ENCODE measurements at regions of chr13 and their contacts with region 1.

Region 1: DNA sequence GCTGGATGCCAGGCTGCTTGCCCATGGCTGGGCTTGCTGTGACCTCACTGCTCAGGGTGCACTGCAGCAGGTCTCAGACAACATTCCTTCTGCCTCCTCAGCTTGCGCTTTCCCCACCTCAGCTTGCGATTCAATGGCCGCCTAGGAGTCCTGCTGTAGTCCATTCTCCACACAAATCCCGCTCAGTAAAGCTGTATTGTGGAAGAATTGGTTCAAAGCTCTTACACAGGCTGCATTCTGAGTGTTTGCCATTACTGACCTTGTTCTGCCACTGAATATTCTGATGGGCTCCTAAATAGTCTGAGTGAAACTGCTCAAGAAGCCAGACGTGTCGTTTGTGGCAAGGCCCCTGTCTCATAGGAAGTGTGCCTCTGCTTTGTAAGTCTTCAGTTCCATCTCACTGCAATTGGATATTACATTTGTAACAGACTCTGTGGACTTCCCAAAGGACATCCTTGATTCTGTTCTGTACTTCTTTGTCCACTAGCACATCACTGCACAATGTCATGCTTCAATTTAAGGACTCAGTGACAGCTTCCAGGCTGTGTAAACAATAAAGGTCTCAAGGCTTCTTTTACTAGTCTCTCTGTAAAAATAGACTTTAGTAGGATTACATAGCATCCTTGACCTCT is 49.8 kb downstream of the KATNAL1 start:
- DNase-seq: no peak
- ATAC-seq: no peak
- H3K4me3 ChIP-seq: no peak overlapping the region
- H3K4me3 Mint-ChIP-seq: no peak overlapping the region
- H3K27ac ChIP-seq: no peak overlapping the region
- H3K27ac Mint-ChIP-seq: peak overlapping the region; percentile 21
- H3K4me1 ChIP-seq: peaks cover 5 to 6% of the 10 kb centered on the region in 2 donors
- H3K4me1 Mint-ChIP-seq: peaks cover 13% of the 10 kb centered on the region
- H3K27me3 ChIP-seq: no peaks in the 10 kb centered on the region
- H3K27me3 Mint-ChIP-seq: no peaks in the 10 kb centered on the region
- CTCF ChIP-seq: no peak

Region 2: DNA sequence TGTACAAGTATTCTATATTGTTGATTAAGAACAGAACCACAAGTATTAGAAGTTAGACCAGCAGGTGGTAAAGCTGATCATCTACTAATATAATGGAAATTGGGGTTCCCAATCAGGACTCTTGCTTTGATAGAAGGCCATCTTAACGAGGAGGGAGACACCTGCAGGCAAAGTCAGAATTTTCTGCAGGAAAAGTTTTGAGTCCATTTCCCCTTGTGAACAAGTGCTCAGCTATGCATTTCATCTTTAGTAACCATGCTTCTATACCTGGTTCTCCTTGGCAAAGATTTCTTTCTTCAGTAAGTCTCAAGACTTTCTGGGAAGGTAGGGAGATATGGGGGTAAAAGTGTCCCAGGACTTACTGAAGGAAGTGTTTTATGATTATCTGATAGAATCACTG is 324.0 kb after region 1 on chr13:
- CTCF ChIA-PET with region 1: interaction called, 3 read pairs
- POLR2A ChIA-PET with region 1: interaction called, 11 read pairs
- intact Hi-C with region 1: no loop called
- DNase-seq: peak; percentile 40
- ATAC-seq: no peak
- H3K4me3 ChIP-seq: no peak overlapping the region
- H3K4me3 Mint-ChIP-seq: no peak overlapping the region
- H3K27ac ChIP-seq: no peak overlapping the region
- H3K27ac Mint-ChIP-seq: no peak overlapping the region
- H3K4me1 ChIP-seq: no peaks in the 10 kb centered on the region
- H3K4me1 Mint-ChIP-seq: peaks cover 9% of the 10 kb centered on the region
- H3K27me3 ChIP-seq: peaks cover 0 to 3% (median 0%) of the 10 kb centered on the region in 4 experiments
- H3K27me3 Mint-ChIP-seq: no peaks in the 10 kb centered on the region
- CTCF ChIP-seq: no peak